Gastrocnemius medialis (tissue), 4 donors: ENCODE measurements at regions of chr1 and their contacts with region 1.

Region 1: GRCh38 chr1:28123461-28123961 is 35.1 kb upstream of the EYA3 start:
- DNase-seq: peak; percentile 60 to 62
- ATAC-seq: peak; percentile 94 to 98
- H3K4me3 ChIP-seq: peak overlapping the region in 1 of 4 donors; percentile 19
- H3K27ac ChIP-seq: peak overlapping the region; percentile 77 to 83 (median 80)
- H3K4me1 ChIP-seq: peaks cover 10 to 11% of the 10 kb centered on the region in 2 donors
- H3K27me3 ChIP-seq: no peaks in the 10 kb centered on the region
- CTCF ChIP-seq: no peak
- POLR2A ChIP-seq: no peak

Region 2: GRCh38 chr1:28099050-28099769 is 24.3 kb before region 1 on chr1:
- in situ Hi-C with region 1: no loop called
- intact Hi-C with region 1: loop called (anchors 1 kb)
- DNase-seq: peak; percentile 64 to 72
- ATAC-seq: peak; percentile 93 to 96
- H3K4me3 ChIP-seq: no peak overlapping the region
- H3K27ac ChIP-seq: peak overlapping the region; percentile 75 to 90 (median 80)
- H3K4me1 ChIP-seq: peaks cover 0 to 12% of the 10 kb centered on the region in 2 donors
- H3K27me3 ChIP-seq: no peaks in the 10 kb centered on the region
- CTCF ChIP-seq: no peak
- POLR2A ChIP-seq: no peak

Region 3: DNA sequence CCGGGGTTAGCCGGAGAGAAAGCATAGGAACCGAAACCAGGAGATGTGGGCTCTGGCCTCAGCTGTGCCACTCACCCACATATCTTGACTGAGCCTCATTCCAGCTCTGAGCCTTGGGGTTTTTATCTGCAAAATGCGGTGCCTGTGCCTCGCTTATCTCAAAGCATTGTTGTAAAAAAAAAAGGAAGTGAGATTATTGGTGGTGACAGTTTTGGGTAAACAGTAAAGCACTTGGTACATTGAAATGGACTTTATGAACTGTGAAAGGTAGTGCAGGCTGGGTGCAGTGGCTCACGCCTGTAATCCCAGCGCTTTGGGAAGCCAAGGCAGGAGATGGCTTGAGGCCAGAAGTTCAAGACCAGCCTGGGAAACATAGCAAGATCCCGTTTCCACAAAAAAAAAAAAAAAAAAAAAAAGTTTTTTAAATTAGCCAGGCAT is 49.2 kb after region 1 on chr1:
- in situ Hi-C with region 1: no loop called
- intact Hi-C with region 1: loop called (anchors 2 kb)
- DNase-seq: no peak
- ATAC-seq: peak; percentile 6
- H3K4me3 ChIP-seq: no peak overlapping the region
- H3K27ac ChIP-seq: peak overlapping the region in 1 of 4 donors; percentile 21
- H3K4me1 ChIP-seq: peaks cover 0 to 12% of the 10 kb centered on the region in 2 donors
- H3K27me3 ChIP-seq: no peaks in the 10 kb centered on the region
- CTCF ChIP-seq: no peak
- POLR2A ChIP-seq: no peak